CD8-positive, alpha-beta T cell (primary cell): ENCODE measurements at regions of chr15 and their contacts with region 1.

Region 1: GRCh38 chr15:67745073-67745993 is 80.0 kb upstream of the SKOR1 start:
- DNase-seq: no peak
- ATAC-seq: no peak
- H3K4me3 ChIP-seq: no peak overlapping the region
- H3K4me3 Mint-ChIP-seq: peak overlapping the region; percentile 74
- H3K27ac ChIP-seq: no peak overlapping the region
- H3K27ac Mint-ChIP-seq: peak overlapping the region; percentile 75
- H3K4me1 ChIP-seq: peaks cover 53% of the 10 kb centered on the region
- H3K4me1 Mint-ChIP-seq: peaks cover 67% of the 10 kb centered on the region
- H3K27me3 ChIP-seq: no peaks in the 10 kb centered on the region
- H3K27me3 Mint-ChIP-seq: no peaks in the 10 kb centered on the region
- CTCF ChIP-seq: no peak

Region 2: DNA sequence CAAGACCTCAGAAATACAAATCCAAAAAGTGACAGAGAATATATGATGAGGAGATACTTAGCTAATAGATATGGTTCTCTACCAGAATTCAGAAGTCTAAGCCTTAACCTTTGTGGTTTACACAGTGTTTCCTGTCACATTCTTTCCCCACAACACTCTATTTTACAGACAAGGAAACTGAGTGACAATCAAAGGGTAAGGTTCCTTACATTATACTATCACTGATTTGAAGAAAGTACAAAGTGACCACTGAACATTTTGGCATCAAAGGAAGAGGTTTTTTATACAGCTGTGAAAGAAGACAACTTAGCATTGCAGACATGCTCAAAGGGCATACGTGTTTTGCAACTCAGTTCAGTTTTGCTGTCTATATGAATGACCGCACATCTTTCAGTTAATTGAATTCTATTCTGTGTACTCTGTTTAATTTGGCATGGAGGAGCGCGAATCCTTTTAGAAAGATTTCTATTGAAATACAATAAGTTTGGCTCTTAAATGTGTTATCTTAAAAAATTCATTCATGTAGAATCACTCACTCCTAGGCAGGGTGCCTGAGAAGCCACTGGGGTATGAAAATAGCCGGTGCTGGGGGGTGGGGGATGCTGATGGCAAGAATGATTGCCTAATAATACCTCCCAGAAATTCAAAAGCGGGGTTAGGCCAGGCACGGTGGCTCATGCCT is 13.4 kb after region 1 on chr15:
- CTCF ChIA-PET with region 1: no interaction called
- POLR2A ChIA-PET with region 1: no interaction called
- intact Hi-C with region 1: loop called in 1 of 2 experiments (anchors 2 kb)
- DNase-seq: peak in 2 of 9 experiments; percentile 27 to 60
- ATAC-seq: peak; percentile 63
- H3K4me3 ChIP-seq: no peak overlapping the region
- H3K4me3 Mint-ChIP-seq: peak overlapping the region; percentile 58
- H3K27ac ChIP-seq: no peak overlapping the region
- H3K27ac Mint-ChIP-seq: peak overlapping the region; percentile 47
- H3K4me1 ChIP-seq: peaks cover 84% of the 10 kb centered on the region
- H3K4me1 Mint-ChIP-seq: peaks cover 94% of the 10 kb centered on the region
- H3K27me3 ChIP-seq: no peaks in the 10 kb centered on the region
- H3K27me3 Mint-ChIP-seq: no peaks in the 10 kb centered on the region
- CTCF ChIP-seq: no peak